ENCODE measurements at regions of chr17 and their contacts with region 1.

Region 1: DNA sequence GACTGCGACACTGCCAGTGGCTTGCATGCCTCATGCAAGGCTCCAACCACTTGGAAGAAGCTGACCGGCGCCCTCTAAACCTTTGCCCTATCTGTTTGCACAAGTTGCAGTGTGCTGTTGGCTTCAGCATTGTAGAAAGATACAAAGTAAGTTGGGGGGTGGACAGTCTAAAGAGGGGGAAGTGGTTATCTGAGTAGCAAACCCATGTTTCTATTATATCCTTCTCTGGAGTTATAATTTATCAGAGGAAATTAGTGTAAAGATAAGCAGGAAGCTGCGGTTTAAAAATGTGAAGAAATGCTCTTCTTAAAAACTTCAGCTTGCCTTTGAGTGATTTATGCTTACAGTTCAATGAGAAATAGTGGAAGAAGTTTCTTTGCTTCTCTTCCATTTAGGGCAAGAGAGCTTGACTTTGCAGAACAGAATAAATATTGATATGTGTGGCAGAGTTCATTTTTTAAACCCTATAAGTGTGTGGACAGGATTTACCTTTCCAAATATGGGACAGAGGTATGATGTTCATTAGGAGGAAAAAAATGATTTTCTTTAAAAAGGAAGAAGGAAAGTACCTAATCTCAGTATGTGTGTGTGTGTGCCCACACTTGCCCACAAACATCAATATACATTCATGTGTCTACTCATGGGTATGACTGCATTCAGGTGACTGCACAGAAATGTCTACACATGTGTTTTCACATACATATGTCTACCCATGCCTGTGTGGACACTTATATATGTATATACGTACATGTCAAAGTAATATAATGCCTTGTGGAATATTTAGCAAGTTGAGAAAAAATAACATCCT is 8.1 kb downstream of the AMZ2 start:
- DNase-seq: peak in 3 of 9 experiments; percentile 33 to 74 (median 58)
- ATAC-seq: peak; percentile 22
- H3K4me3 ChIP-seq: no peak overlapping the region
- H3K4me3 Mint-ChIP-seq: peak overlapping the region; percentile 24
- H3K27ac ChIP-seq: peak overlapping the region; percentile 34 to 97
- H3K27ac Mint-ChIP-seq: peak overlapping the region; percentile 97
- H3K4me1 ChIP-seq: peaks cover 76% of the 10 kb centered on the region
- H3K4me1 Mint-ChIP-seq: peaks cover 82% of the 10 kb centered on the region
- H3K27me3 ChIP-seq: no peaks in the 10 kb centered on the region
- H3K27me3 Mint-ChIP-seq: no peaks in the 10 kb centered on the region
- CTCF ChIP-seq: no peak

Region 2: DNA sequence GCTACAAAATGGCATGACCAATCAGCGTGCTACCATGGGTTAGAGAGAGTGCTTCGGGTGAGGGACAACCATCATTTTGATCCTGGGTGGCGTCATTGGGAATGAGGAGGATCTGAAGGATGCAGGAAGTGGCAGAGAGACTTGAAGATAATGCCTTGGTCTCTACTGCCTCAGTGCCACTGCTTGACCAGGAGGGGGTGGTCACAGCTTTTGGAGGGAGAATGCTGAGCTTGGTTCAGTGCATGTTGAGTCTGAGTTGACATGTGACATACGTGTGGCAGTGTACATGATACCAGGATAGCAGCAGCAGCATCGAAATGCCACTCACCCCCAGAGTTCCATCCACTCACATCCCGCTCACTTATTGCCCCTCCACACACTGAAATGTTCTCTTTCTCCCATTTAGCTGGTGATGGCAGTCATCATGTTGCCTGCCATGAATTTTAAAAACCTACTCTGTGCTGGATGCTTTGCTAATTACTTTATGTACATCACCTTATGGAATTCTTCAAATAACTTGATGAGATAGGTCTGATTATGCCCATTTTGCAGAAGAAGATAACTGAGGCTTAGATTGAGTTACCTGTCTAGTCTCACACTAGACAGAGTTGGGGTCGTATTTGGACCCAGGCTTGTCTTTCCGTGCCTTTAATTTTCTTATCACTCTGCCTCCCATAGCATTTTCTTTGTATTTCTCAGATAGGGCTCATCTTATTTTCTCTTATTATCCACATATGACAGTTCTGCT is 72.1 kb after region 1 on chr17:
- CTCF ChIA-PET with region 1: no interaction called
- POLR2A ChIA-PET with region 1: no interaction called
- intact Hi-C with region 1: no loop called
- DNase-seq: peak in 1 of 9 experiments; percentile 33
- ATAC-seq: no peak
- H3K4me3 ChIP-seq: no peak overlapping the region
- H3K4me3 Mint-ChIP-seq: no peak overlapping the region
- H3K27ac ChIP-seq: no peak overlapping the region
- H3K27ac Mint-ChIP-seq: no peak overlapping the region
- H3K4me1 ChIP-seq: peaks cover 15% of the 10 kb centered on the region
- H3K4me1 Mint-ChIP-seq: peaks cover 21% of the 10 kb centered on the region
- H3K27me3 ChIP-seq: no peaks in the 10 kb centered on the region
- H3K27me3 Mint-ChIP-seq: no peaks in the 10 kb centered on the region
- CTCF ChIP-seq: no peak

Region 3: GRCh38 chr17:68398691-68399637 is 143.0 kb after region 1 on chr17:
- CTCF ChIA-PET with region 1: interaction called, 40 read pairs
- POLR2A ChIA-PET with region 1: no interaction called
- intact Hi-C with region 1: no loop called
- DNase-seq: peak in 5 of 9 experiments; percentile 30 to 62 (median 46)
- ATAC-seq: no peak
- H3K4me3 ChIP-seq: no peak overlapping the region
- H3K4me3 Mint-ChIP-seq: no peak overlapping the region
- H3K27ac ChIP-seq: no peak overlapping the region
- H3K27ac Mint-ChIP-seq: no peak overlapping the region
- H3K4me1 ChIP-seq: peaks cover 14% of the 10 kb centered on the region
- H3K4me1 Mint-ChIP-seq: peaks cover 30% of the 10 kb centered on the region
- H3K27me3 ChIP-seq: no peaks in the 10 kb centered on the region
- H3K27me3 Mint-ChIP-seq: no peaks in the 10 kb centered on the region
- CTCF ChIP-seq: no peak